ENCODE measurements at regions of chr3 and their contacts with region 1.

Region 1: GRCh38 chr3:150495563-150496168 is 50.6 kb downstream of the SERP1 start:
- DNase-seq: peak; percentile 68
- ATAC-seq: peak; percentile 45
- H3K4me3 ChIP-seq: no peak overlapping the region
- H3K4me3 Mint-ChIP-seq: no peak overlapping the region
- H3K27ac ChIP-seq: no peak overlapping the region
- H3K27ac Mint-ChIP-seq: no peak overlapping the region
- H3K4me1 ChIP-seq: no peaks in the 10 kb centered on the region
- H3K4me1 Mint-ChIP-seq: no peaks in the 10 kb centered on the region
- H3K27me3 ChIP-seq: no peaks in the 10 kb centered on the region
- H3K27me3 Mint-ChIP-seq: no peaks in the 10 kb centered on the region
- CTCF ChIP-seq: peak; percentile 91

Region 2: DNA sequence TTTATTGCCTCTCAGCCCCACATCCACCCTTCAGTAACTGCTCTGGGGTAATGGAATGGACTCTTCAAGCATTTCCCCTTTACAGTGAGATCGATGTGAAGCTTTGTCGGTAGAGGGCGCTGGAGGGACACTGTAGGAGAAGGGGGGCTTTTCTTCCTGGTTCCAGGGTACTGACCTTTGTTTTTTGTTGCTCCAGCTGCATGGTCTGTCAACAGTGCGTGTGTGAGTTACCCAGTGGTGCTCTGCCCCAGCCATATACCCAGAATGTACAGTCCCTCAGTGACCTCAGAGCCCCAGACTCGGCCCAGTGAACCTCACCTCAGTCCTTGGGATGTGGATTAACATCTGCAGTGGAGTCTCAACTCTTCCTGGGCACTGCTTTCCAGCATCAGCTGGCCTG is 267.8 kb before region 1 on chr3:
- CTCF ChIA-PET with region 1: interaction called, 3 read pairs
- POLR2A ChIA-PET with region 1: no interaction called
- intact Hi-C with region 1: loop called (anchors 5 kb)
- DNase-seq: peak; percentile 38
- ATAC-seq: no peak
- H3K4me3 ChIP-seq: no peak overlapping the region
- H3K4me3 Mint-ChIP-seq: no peak overlapping the region
- H3K27ac ChIP-seq: no peak overlapping the region
- H3K27ac Mint-ChIP-seq: no peak overlapping the region
- H3K4me1 ChIP-seq: no peaks in the 10 kb centered on the region
- H3K4me1 Mint-ChIP-seq: no peaks in the 10 kb centered on the region
- H3K27me3 ChIP-seq: peaks cover 0 to 9% (median 5%) of the 10 kb centered on the region in 4 experiments
- H3K27me3 Mint-ChIP-seq: peaks cover 30% of the 10 kb centered on the region
- CTCF ChIP-seq: peak; percentile 38

Region 3: DNA sequence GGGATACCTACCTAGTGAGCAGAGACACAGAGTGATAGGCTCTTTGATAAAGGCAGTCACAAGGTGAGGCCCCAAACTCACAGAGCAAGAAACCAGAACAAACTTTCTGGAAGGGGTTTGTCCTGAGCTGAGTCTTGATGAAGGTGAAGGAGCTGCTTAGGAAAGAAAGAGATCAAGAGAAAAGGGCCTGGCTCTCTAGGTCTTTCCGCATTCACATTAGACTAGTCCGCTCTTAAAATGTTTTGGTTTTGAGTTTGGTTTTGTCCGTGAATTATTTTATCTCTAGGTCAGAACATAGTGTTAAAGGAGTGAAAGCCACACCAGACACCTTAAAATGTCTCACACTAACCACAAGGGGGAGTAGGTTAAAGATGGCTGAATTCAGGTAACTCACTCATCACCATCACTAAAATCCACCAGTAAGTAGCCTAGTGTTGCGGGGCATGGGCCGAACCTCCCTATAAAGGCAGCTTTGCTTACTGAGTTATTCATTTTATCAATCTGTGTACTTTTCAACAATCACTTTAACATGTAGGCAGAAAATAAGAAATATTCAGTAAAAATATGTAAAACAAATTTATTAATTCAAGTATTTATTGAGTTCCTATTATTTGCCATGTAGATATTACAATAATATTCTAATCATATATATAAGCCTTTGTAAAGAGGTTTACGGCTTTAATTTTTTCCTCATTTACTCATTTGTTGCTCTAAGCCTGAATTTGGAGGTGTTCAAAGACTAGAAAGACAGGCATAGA is 209.1 kb before region 1 on chr3:
- CTCF ChIA-PET with region 1: interaction called, 170 read pairs
- POLR2A ChIA-PET with region 1: no interaction called
- intact Hi-C with region 1: loop called (anchors 1 kb)
- DNase-seq: peak; percentile 68
- ATAC-seq: peak; percentile 79
- H3K4me3 ChIP-seq: no peak overlapping the region
- H3K4me3 Mint-ChIP-seq: no peak overlapping the region
- H3K27ac ChIP-seq: no peak overlapping the region
- H3K27ac Mint-ChIP-seq: no peak overlapping the region
- H3K4me1 ChIP-seq: no peaks in the 10 kb centered on the region
- H3K4me1 Mint-ChIP-seq: no peaks in the 10 kb centered on the region
- H3K27me3 ChIP-seq: no peaks in the 10 kb centered on the region
- H3K27me3 Mint-ChIP-seq: peaks cover 27% of the 10 kb centered on the region
- CTCF ChIP-seq: peak; percentile 73

Region 4: GRCh38 chr3:150610790-150611189 is 115.1 kb after region 1 on chr3:
- CTCF ChIA-PET with region 1: no interaction called
- POLR2A ChIA-PET with region 1: no interaction called
- intact Hi-C with region 1: no loop called
- DNase-seq: no peak
- ATAC-seq: no peak
- H3K4me3 ChIP-seq: no peak overlapping the region
- H3K4me3 Mint-ChIP-seq: no peak overlapping the region
- H3K27ac ChIP-seq: peak overlapping the region in 1 of 2 donors; percentile 3
- H3K27ac Mint-ChIP-seq: no peak overlapping the region
- H3K4me1 ChIP-seq: peaks cover 36 to 58% of the 10 kb centered on the region in 2 donors
- H3K4me1 Mint-ChIP-seq: peaks cover 69% of the 10 kb centered on the region
- H3K27me3 ChIP-seq: no peaks in the 10 kb centered on the region
- H3K27me3 Mint-ChIP-seq: no peaks in the 10 kb centered on the region
- CTCF ChIP-seq: no peak

Region 5: DNA sequence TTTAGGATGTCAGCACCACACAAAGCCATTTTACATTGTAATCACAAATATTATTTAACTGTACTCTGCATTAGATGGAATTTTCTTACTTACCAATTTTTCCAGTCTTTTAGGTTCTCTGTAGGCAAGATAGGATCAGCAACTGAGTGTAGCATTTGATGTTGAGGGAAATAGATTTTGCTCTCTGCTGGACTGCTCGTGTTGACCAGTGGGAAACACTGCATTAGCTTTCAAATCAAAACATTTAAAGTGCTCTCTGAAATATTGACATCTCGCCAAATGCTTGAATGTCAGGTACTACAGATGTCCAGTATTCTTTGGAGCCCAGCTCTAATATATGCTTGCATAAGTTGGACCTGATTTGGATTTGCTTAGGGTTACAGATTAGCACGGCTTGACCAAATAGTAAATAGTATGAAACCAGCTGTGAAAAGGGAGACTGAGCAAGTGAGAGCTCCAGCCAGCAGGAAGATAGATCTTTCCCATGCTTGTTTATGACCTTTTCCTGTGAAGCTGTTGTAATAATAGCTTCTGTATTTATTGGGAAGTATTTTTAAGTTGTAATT is 753.2 kb after region 1 on chr3:
- CTCF ChIA-PET with region 1: no interaction called
- POLR2A ChIA-PET with region 1: no interaction called
- intact Hi-C with region 1: no loop called
- DNase-seq: no peak
- ATAC-seq: no peak
- H3K4me3 ChIP-seq: no peak overlapping the region
- H3K4me3 Mint-ChIP-seq: no peak overlapping the region
- H3K27ac ChIP-seq: no peak overlapping the region
- H3K27ac Mint-ChIP-seq: no peak overlapping the region
- H3K4me1 ChIP-seq: no peaks in the 10 kb centered on the region
- H3K4me1 Mint-ChIP-seq: peaks cover 11% of the 10 kb centered on the region
- H3K27me3 ChIP-seq: no peaks in the 10 kb centered on the region
- H3K27me3 Mint-ChIP-seq: no peaks in the 10 kb centered on the region
- CTCF ChIP-seq: no peak